Activated T-helper 1 cell treated with anti-CD3 and anti-CD28 coated beads, Interleukin-12 subunit alpha, Interleukin-12 subunit beta, Interleukin-2, Interleukin-4 antibody, amounts not matched to agents 30 ng/mL and 10 ng/mL and 1 ng/mL, durations not matched to agents 14 hours and 24 hours and 36 hours (primary cell): ENCODE measurements at regions of chr5 and their contacts with region 1.

Region 1: DNA sequence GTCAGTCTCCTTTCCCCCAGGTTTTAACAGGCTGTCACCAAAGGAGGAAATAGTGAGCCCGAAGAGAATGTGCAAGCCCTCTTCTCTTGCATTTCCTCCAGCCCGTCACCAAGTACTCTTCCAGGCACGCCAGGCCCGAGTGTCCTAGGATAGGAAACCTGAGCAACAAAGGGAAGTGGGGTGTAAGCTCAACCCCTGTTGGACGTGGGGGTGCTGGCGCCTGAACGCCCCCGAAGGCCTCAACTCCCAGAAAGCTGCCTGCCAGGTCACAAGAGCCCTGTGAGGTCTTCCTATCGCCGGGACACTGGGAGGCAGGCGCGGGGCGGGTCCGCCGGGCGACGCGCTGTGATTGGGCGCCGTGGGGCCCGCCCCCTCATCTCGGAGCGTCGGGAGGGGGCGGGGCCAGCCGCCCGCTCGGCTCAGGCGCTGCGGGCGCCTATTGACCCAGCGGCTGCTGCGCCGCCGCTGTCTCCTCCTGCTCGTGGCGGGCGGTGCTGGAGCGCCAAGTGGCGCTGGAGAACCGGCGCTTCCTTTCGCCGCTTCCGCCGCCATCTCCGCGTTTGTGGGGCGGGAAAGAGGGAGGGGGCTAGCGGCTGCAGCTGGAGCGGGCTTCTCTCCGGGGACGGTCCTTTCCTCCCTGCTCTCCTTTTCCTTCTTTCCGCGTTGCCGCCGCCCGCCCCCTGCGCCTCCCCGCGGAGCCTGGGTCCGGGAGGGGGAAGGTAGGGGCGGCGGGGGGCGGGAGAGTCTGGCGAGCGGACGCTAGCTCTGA is 572 bp upstream of the MAN2A1 start:
- DNase-seq: peak; percentile 77
- H3K4me3 Mint-ChIP-seq: peak overlapping the region; percentile 98
- H3K27ac Mint-ChIP-seq: peak overlapping the region; percentile 94
- H3K4me1 Mint-ChIP-seq: peaks cover 46% of the 10 kb centered on the region
- H3K27me3 Mint-ChIP-seq: no peaks in the 10 kb centered on the region

Region 2: DNA sequence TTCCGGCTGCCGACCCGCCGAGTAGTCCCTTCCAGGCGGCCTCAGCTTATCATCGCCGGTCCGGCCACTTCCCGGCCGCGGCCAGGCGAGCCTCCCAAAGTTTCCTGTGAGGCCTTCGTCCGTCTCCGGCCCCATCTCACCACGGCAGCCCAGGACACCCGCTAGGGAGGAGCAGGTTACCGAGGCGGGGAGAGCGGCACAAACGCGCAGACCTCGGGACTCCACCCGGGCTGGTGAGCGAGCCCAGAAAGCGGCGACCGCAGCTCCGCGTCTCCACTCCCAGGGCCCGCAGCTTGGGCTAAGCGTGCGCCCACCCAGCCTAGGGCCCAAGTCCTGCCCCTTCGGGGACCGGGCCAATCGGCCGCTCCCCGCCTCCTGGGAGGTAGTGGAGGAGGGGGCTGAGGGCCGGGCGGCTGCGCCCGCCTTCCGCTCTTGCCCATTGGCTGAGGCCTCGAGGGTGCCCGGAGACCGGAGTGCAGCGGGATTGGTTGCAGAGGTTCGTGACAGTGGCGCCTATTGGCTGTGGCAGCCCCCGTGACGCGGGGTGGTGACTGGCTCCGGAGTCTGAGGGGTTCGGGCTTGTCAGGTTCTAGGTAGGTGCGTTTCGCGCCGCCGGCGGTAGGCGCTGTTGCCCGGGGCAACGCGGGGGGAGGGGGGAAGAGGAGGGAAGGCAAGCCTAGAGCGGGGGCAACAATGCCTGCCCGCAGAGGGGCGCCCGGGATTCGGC is 940.6 kb before region 1 on chr5:
- intact Hi-C with region 1: loop called (anchors 1 kb)
- DNase-seq: peak; percentile 95
- H3K4me3 Mint-ChIP-seq: peak overlapping the region; percentile 87
- H3K27ac Mint-ChIP-seq: peak overlapping the region; percentile 68
- H3K4me1 Mint-ChIP-seq: peaks cover 15% of the 10 kb centered on the region
- H3K27me3 Mint-ChIP-seq: peaks cover 30% of the 10 kb centered on the region

Region 3: DNA sequence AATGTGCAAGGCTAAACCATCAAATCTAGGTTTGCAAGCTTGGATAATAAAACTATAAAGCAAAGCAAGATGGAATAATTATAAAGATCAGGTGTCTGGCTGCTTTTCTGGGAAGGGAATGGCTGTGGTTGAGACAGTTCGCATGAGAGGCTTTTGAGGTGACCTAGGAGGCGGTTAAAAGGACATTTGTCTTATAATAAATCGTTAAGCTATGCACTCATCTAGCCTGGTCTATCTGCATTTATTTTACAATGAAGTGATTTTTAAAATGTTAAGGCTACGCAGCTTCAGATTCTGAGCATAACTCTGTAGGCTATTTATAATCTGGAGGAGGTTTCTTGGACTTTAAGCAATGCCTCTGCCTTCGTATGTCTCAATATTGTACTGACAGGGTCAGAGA is 28.9 kb before region 1 on chr5:
- intact Hi-C with region 1: no loop called
- DNase-seq: no peak
- H3K4me3 Mint-ChIP-seq: no peak overlapping the region
- H3K27ac Mint-ChIP-seq: no peak overlapping the region
- H3K4me1 Mint-ChIP-seq: peaks cover 21% of the 10 kb centered on the region
- H3K27me3 Mint-ChIP-seq: peaks cover 13% of the 10 kb centered on the region

Region 4: DNA sequence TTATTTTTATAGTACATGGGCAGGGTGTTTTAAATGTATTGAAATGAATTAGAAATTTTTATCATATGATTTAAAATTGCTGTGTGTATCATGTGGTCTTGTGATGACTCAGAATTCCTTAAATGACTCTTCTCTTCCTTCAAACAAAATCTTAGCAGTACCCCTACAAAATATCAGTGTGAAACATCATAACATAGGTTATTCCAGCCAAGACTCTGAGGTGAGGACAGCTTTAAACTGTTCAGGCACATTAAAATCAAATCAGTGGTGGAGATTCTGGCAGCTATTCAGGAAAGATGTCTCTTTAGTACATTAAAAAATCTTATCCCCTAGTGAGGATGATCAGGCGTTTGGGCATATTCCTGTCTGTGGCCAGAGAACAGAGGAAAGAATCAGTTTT is 174.6 kb after region 1 on chr5:
- intact Hi-C with region 1: loop called (anchors 2 kb)
- DNase-seq: no peak
- H3K4me3 Mint-ChIP-seq: no peak overlapping the region
- H3K27ac Mint-ChIP-seq: peak overlapping the region; percentile 38
- H3K4me1 Mint-ChIP-seq: peaks cover 50% of the 10 kb centered on the region
- H3K27me3 Mint-ChIP-seq: no peaks in the 10 kb centered on the region

Region 5: GRCh38 chr5:110054240-110054639 is 365.1 kb after region 1 on chr5:
- intact Hi-C with region 1: loop called (anchors 1 kb)
- DNase-seq: peak; percentile 72
- H3K4me3 Mint-ChIP-seq: no peak overlapping the region
- H3K27ac Mint-ChIP-seq: peak overlapping the region; percentile 74
- H3K4me1 Mint-ChIP-seq: peaks cover 27% of the 10 kb centered on the region
- H3K27me3 Mint-ChIP-seq: no peaks in the 10 kb centered on the region

Region 6: GRCh38 chr5:110414360-110414759 is 725.2 kb after region 1 on chr5:
- intact Hi-C with region 1: loop called (anchors 2 kb)
- DNase-seq: no peak
- H3K4me3 Mint-ChIP-seq: no peak overlapping the region
- H3K27ac Mint-ChIP-seq: no peak overlapping the region
- H3K4me1 Mint-ChIP-seq: no peaks in the 10 kb centered on the region
- H3K27me3 Mint-ChIP-seq: peaks cover 2% of the 10 kb centered on the region

Region 7: GRCh38 chr5:110751902-110752762 is 1063.0 kb after region 1 on chr5:
- intact Hi-C with region 1: loop called (anchors 5 kb)
- DNase-seq: peak; percentile 52
- H3K4me3 Mint-ChIP-seq: peak overlapping the region; percentile 64
- H3K27ac Mint-ChIP-seq: peak overlapping the region; percentile 92
- H3K4me1 Mint-ChIP-seq: peaks cover 60% of the 10 kb centered on the region
- H3K27me3 Mint-ChIP-seq: no peaks in the 10 kb centered on the region